Activated naive CD4-positive, alpha-beta T cell treated with anti-CD3 and anti-CD28 coated beads for 36 hours (primary cell): ENCODE measurements at regions of chr1 and their contacts with region 1.

Region 1: DNA sequence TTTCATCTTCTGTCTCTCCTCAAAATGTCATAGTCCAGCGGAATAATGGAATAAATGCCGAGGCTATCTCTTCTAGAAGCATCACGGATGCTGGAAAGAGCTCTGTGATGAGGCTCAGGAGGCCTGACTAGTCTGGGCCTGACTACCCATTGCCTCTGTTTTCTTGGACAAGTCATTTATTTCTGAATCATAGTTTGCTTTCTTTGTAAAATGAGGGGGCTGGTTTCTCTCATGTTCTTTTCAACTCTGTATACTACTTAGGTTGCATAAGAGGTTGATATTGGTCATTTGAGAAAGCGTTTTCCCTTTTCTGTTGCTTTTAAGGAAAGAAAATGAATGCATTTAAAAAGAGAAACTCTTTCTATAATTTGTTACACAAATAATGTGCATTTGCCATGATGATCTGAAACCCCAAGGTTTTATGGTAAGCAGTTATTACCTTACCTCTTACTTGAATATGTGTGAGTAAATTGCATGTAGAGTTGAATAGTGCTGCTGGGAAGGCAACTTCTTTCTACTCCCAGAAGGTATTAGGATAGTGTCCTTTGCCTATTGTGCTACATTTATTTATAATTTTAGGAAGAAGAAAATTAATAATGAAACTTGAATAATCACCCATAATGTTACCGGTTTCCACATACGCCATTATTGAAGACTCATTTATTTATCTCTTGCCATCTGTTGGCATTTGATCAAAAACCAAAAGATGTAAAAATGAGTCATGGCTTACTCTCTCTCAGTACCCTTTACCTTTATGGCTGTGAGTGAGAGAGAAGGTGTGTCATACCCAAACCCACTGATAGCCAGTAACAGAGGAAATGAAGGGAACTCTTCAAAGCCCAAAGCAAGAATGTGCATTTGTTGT is 179.1 kb downstream of the FASLG start:
- DNase-seq: peak; percentile 46
- H3K4me3 Mint-ChIP-seq: no peak overlapping the region
- H3K27ac Mint-ChIP-seq: no peak overlapping the region
- H3K4me1 Mint-ChIP-seq: peaks cover 19% of the 10 kb centered on the region
- H3K27me3 Mint-ChIP-seq: peaks cover 25% of the 10 kb centered on the region

Region 2: DNA sequence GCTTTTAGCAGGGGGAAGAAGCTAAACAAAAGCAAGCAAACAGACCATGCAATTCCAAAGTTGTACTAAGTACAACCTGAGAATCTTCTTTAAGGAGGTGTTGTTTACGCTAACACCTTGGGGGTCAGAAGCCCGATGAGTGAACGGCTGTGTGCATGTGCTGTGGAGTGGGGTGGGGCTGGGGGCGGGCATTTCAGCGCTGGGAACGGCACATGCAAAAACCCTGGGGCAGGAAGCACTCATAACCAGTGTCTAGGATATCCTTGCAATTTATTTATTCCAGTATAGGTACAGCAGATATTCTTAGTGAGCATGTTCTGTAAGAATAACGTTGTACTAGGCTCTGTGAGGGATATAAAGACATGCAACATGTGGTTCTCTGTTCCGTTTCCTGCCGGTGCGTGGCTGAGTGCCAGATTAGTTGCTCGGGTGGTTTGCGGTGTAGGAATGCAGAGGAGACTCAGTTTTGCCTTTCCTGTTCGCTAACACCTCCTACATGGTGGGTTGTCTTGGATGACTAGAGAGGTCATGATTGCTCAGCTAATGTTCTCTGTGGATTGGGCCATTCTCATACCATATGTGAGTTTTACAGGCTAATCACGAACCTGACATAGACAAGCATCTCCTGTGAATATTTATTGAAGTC is 175.5 kb before region 1 on chr1:
- CTCF ChIA-PET with region 1: no interaction called
- intact Hi-C with region 1: loop called (anchors 2 kb)
- DNase-seq: peak; percentile 96
- H3K4me3 Mint-ChIP-seq: peak overlapping the region; percentile 26
- H3K27ac Mint-ChIP-seq: peak overlapping the region; percentile 60
- H3K4me1 Mint-ChIP-seq: peaks cover 68% of the 10 kb centered on the region
- H3K27me3 Mint-ChIP-seq: peaks cover 3% of the 10 kb centered on the region

Region 3: GRCh38 chr1:172818841-172819527 is 19.1 kb before region 1 on chr1:
- CTCF ChIA-PET with region 1: interaction called, 3 read pairs
- intact Hi-C with region 1: loop called (anchors 1 kb)
- DNase-seq: peak; percentile 68
- H3K4me3 Mint-ChIP-seq: no peak overlapping the region
- H3K27ac Mint-ChIP-seq: no peak overlapping the region
- H3K4me1 Mint-ChIP-seq: peaks cover 25% of the 10 kb centered on the region
- H3K27me3 Mint-ChIP-seq: no peaks in the 10 kb centered on the region

Region 4: GRCh38 chr1:172906778-172907592 is 68.9 kb after region 1 on chr1:
- CTCF ChIA-PET with region 1: no interaction called
- intact Hi-C with region 1: loop called (anchors 2 kb)
- DNase-seq: peak; percentile 46
- H3K4me3 Mint-ChIP-seq: no peak overlapping the region
- H3K27ac Mint-ChIP-seq: no peak overlapping the region
- H3K4me1 Mint-ChIP-seq: peaks cover 19% of the 10 kb centered on the region
- H3K27me3 Mint-ChIP-seq: no peaks in the 10 kb centered on the region

Region 5: GRCh38 chr1:173297798-173298391 is 459.8 kb after region 1 on chr1:
- CTCF ChIA-PET with region 1: no interaction called
- intact Hi-C with region 1: loop called (anchors 1 kb)
- DNase-seq: peak; percentile 76
- H3K4me3 Mint-ChIP-seq: no peak overlapping the region
- H3K27ac Mint-ChIP-seq: peak overlapping the region; percentile 2
- H3K4me1 Mint-ChIP-seq: peaks cover 41% of the 10 kb centered on the region
- H3K27me3 Mint-ChIP-seq: no peaks in the 10 kb centered on the region